ENCODE measurements at regions of chr4 and their contacts with region 1.

Region 1: DNA sequence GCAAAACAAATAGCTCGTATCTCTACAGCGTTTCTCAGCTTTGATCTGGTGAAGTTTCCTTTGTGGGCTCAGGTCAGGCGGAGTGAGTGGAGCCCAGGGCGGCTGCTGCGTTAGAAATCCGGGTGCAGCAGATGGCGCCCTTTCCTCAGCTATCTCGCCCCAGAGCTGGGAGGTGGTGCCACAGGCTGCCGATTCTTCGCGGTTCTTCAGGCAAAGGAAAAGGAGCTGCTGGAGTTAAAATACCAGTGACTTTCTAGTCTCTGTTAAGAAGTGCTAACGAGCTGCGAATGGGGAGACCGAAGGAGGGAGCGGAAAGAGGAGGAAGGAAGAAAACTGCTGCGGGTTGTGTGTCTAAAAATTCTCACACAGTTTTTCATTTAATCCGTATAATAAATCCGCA is 114.6 kb downstream of the CPE start:
- DNase-seq: peak; percentile 51 to 74
- ATAC-seq: peak; percentile 86 to 97 (median 92)
- H3K4me3 ChIP-seq: peak overlapping the region in 2 of 10 donors; percentile 13 to 25
- H3K27ac ChIP-seq: no peak overlapping the region
- H3K4me1 ChIP-seq: peaks cover 0 to 7% (median 0%) of the 10 kb centered on the region in 9 donors
- H3K27me3 ChIP-seq: peaks cover 0 to 13% (median 0%) of the 10 kb centered on the region in 7 donors
- CTCF ChIP-seq: peak; percentile 39 to 83 (median 67)

Region 2: GRCh38 chr4:165580351-165580905 is 87.1 kb after region 1 on chr4:
- intact Hi-C with region 1: no loop called
- DNase-seq: peak in 1 of 2 donors; percentile 10
- ATAC-seq: peak in 7 of 8 donors; percentile 78 to 99 (median 96)
- H3K4me3 ChIP-seq: no peak overlapping the region
- H3K27ac ChIP-seq: peak overlapping the region in 9 of 10 donors; percentile 22 to 78 (median 51)
- H3K4me1 ChIP-seq: peaks cover 0 to 13% (median 7%) of the 10 kb centered on the region in 9 donors
- H3K27me3 ChIP-seq: no peaks in the 10 kb centered on the region
- CTCF ChIP-seq: no peak

Region 3: DNA sequence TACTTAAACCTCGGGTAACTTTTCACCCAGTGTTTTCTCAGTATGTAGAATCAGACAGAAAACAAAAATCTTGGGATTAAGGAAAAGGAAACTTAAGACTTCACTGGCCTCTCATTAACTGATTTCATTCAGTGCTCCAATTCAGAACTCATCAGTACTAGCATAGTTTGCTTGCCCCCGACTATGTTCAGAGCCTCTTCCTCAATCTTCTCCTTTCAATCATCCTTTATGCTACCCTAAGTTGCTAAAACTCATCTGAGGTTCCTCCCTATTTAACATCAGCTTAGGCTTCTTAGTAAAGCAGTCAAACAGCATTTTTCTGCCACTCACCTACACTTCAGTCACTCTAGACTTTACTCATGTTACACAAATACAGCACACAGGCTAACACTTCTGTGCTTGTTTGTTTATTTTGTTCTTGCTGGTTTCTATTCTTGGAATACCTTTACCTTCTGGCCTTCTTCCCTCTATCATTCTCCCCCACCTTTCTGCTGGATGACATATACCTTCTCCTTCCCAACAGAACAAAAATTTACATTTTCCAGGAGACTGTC is 216.7 kb after region 1 on chr4:
- intact Hi-C with region 1: no loop called
- DNase-seq: no peak
- ATAC-seq: no peak
- H3K4me3 ChIP-seq: no peak overlapping the region
- H3K27ac ChIP-seq: peak overlapping the region in 1 of 10 donors; percentile 22
- H3K4me1 ChIP-seq: no peaks in the 10 kb centered on the region
- H3K27me3 ChIP-seq: no peaks in the 10 kb centered on the region
- CTCF ChIP-seq: no peak

Region 4: DNA sequence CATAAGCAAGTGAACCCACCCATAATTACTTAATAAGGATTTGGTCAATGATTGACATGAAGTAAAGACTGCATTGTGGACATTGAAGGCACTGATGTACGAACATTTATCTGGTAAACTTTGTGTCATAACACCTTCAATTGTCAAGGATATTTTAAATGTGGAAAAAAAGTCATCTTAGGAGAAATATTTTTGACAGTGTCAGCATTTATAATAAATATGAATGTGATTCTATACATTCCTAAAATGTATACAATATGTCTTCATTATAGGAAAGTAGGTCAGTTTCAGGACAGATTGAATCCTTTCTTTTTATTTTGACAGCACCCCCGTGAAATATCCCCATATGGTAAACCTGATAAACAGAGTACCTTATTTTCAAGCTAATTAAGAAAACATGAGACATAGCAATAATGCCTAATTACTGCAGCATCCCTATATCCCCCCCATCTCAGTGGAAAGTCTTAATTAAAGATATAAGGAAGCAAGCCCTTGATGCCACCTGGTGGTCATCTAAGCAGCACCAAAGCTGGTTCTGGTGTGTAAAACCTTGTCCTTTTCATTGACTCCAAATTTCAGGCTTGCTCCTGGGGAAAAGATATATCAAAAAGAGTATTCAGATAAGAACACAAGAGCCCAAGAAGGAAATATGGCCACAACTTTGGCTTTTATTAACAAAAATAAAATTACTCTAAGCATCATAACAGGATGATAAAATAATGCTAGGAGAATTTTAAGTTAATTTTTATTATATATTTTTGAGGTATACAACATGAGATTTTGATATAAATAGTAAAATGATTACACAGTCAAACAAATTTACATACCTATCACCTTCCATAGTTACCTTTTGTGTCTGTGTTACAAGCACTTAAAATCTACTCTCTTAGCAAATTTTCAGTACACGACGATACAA is 759.4 kb after region 1 on chr4:
- intact Hi-C with region 1: loop called in 1 of 10 experiments (anchors 10 kb)
- DNase-seq: no peak
- ATAC-seq: no peak
- H3K4me3 ChIP-seq: no peak overlapping the region
- H3K27ac ChIP-seq: no peak overlapping the region
- H3K4me1 ChIP-seq: no peaks in the 10 kb centered on the region
- H3K27me3 ChIP-seq: no peaks in the 10 kb centered on the region
- CTCF ChIP-seq: peak in 7 of 9 donors; percentile 32 to 58 (median 48)